Activated CD4-positive, alpha-beta T cell treated with anti-CD3 and anti-CD28 coated beads for 36 hours (primary cell): ENCODE measurements at regions of chr11 and their contacts with region 1.

Region 1: GRCh38 chr11:112086422-112087191 is at the starts of genes SDHD and TIMM8B:
- DNase-seq: peak; percentile 97
- ATAC-seq: peak; percentile 86
- H3K4me3 Mint-ChIP-seq: peak within 1 kb of the TSS; percentile 97
- H3K27ac Mint-ChIP-seq: peak within 1 kb of the TSS; percentile 93
- H3K4me1 Mint-ChIP-seq: peaks cover 63% of the 10 kb centered on the region
- H3K27me3 Mint-ChIP-seq: no peaks in the 10 kb centered on the region
- total RNA-seq, gene SDHD: 79.8 to 84.9 TPM
- total RNA-seq, gene TIMM8B: 50.5 to 52.6 TPM

Region 2: DNA sequence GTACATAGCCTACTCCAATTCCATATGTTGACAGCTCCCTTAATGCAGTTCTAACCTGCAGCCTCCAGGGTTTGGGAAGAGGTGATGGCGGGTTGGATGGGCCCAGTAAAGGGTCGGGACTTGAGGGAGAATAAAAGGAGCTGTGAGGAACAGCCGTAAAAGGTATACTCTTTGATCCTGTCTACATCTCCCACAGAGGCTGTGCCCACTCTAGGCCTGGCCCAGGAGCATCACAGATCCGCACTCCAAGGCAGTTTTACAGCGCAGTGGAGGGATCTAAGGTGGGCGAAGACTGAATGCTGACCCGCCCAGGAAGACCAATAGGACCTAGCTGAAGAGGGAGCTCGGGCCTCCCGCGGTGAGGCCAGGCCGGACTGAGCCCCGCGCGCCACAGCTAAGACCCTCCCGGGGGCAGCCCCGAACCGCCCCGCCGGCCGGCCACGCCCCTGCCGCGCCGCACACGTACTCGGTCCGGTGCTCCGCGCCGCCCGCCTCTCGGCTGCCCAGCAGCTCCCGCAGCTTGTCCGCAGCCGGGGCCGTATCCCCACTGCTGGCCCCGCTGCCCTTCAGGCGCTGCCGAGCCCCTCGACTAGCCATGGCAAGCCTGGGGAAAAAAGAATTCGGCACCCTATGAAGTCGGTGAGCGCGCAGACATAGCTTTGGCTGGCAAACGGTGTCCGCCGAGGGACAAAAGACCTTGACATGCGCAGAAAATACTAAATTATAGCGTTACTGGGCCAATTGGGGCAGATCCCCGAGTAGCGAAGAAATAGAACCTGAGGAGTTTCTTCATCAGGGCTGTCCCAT is 215.5 kb before region 1 on chr11 and contains the start of gene ALG9:
- CTCF ChIA-PET with region 1: interaction called, 7 read pairs
- POLR2A ChIA-PET with region 1: no interaction called
- intact Hi-C with region 1: loop called in 1 of 2 experiments (anchors 2 kb)
- DNase-seq: peak; percentile 94
- ATAC-seq: peak; percentile 87
- H3K4me3 Mint-ChIP-seq: peak within 1 kb of the TSS; percentile 95
- H3K27ac Mint-ChIP-seq: peak within 1 kb of the TSS; percentile 90
- H3K4me1 Mint-ChIP-seq: peaks cover 26% of the 10 kb centered on the region
- H3K27me3 Mint-ChIP-seq: no peaks in the 10 kb centered on the region
- total RNA-seq, gene ALG9: 30.4 to 41.2 TPM

Region 3: DNA sequence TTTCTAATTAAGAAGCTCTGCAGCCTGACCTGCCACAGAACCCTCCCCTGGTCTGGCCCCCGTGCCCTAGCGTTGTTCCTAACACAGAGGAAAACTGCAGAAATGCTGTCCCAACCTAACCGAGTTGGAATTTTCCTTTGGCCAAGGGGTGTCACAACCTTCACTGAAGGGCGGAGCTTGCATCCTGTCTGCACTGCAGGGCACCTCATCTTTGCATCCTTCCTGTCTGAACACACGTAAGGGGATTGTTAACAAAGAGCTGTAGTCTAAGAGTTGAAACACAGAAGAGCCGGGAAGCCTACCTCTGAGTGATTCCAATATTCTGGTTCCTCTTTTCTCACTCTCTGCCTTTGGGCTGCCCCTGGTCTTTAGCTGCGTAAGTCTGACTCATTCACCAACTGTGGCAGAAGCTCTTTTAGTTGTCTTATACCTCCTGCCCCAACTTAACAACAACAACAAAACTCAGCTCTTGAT is 147.9 kb before region 1 on chr11:
- CTCF ChIA-PET with region 1: interaction called, 3 read pairs
- POLR2A ChIA-PET with region 1: no interaction called
- intact Hi-C with region 1: loop called in 1 of 2 experiments (anchors 2 kb)
- DNase-seq: peak; percentile 66
- ATAC-seq: peak; percentile 89
- H3K4me3 Mint-ChIP-seq: peak overlapping the region; percentile 73
- H3K27ac Mint-ChIP-seq: peak overlapping the region; percentile 93
- H3K4me1 Mint-ChIP-seq: peaks cover 51% of the 10 kb centered on the region
- H3K27me3 Mint-ChIP-seq: no peaks in the 10 kb centered on the region

Region 4: GRCh38 chr11:112057170-112057569 is 29.4 kb before region 1 on chr11:
- CTCF ChIA-PET with region 1: interaction called, 4 read pairs
- POLR2A ChIA-PET with region 1: interaction called, 6 read pairs
- intact Hi-C with region 1: loop called in 1 of 2 experiments (anchors 1 kb)
- DNase-seq: peak; percentile 34
- ATAC-seq: peak; percentile 91
- H3K4me3 Mint-ChIP-seq: peak overlapping the region; percentile 2
- H3K27ac Mint-ChIP-seq: peak overlapping the region; percentile 81
- H3K4me1 Mint-ChIP-seq: peaks cover 19% of the 10 kb centered on the region
- H3K27me3 Mint-ChIP-seq: no peaks in the 10 kb centered on the region

Region 5: GRCh38 chr11:112159098-112160065 is 72.8 kb after region 1 on chr11:
- CTCF ChIA-PET with region 1: no interaction called
- POLR2A ChIA-PET with region 1: interaction called, 21 read pairs
- intact Hi-C with region 1: no loop called
- DNase-seq: no peak
- ATAC-seq: no peak
- H3K4me3 Mint-ChIP-seq: no peak overlapping the region
- H3K27ac Mint-ChIP-seq: no peak overlapping the region
- H3K4me1 Mint-ChIP-seq: peaks cover 9% of the 10 kb centered on the region
- H3K27me3 Mint-ChIP-seq: peaks cover 19% of the 10 kb centered on the region

Region 6: GRCh38 chr11:112280268-112281126 is 193.9 kb after region 1 on chr11:
- CTCF ChIA-PET with region 1: interaction called, 6 read pairs
- POLR2A ChIA-PET with region 1: no interaction called
- intact Hi-C with region 1: loop called in 1 of 2 experiments (anchors 10 kb)
- DNase-seq: peak; percentile 77
- ATAC-seq: peak; percentile 92
- H3K4me3 Mint-ChIP-seq: peak overlapping the region; percentile 82
- H3K27ac Mint-ChIP-seq: peak overlapping the region; percentile 76
- H3K4me1 Mint-ChIP-seq: peaks cover 14% of the 10 kb centered on the region
- H3K27me3 Mint-ChIP-seq: no peaks in the 10 kb centered on the region